ENCODE measurements at regions of chr14 and their contacts with region 1.

Region 1: DNA sequence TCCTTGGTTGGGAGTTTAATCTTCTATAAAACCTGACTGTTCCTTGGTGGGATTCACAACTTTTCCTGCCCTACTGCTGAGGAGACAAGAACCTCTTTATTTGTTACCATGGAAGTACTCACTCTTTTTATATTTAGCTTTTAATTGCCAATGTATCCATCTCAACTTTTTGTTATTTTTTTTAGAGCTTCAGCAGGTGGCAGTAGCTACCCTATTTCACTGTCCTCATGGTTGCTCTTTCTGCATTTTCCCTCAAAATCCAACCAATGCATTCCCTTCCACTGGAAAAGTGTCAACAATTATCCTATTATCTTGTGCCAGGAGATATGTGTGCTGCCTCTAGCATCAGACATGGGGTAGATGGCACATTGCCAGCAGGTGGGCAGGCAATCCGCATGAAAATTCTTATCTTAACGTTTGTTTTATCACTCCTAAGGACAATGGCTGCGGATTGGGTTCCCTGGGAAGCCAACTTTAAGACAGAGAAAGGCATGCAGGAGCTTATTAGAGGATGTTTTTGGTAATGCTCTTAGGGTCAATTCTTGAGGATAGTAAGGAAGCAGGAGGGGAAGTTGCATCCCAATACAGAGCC is 406.4 kb downstream of the SNAPC1 start:
- DNase-seq: no peak
- ATAC-seq: no peak
- H3K4me3 ChIP-seq: no peak overlapping the region
- H3K27ac ChIP-seq: no peak overlapping the region
- H3K4me1 ChIP-seq: no peaks in the 10 kb centered on the region
- H3K27me3 ChIP-seq: no peaks in the 10 kb centered on the region
- CTCF ChIP-seq: peak; percentile 17; the same call in 1 of the 2 replicates

Region 2: GRCh38 chr14:63257299-63257698 is 1088.6 kb after region 1 on chr14:
- CTCF ChIA-PET with region 1: no interaction called
- POLR2A ChIA-PET with region 1: interaction called, 20 read pairs
- in situ Hi-C with region 1: no loop called
- intact Hi-C with region 1: no loop called
- DNase-seq: no peak
- ATAC-seq: no peak
- H3K4me3 ChIP-seq: no peak overlapping the region
- H3K27ac ChIP-seq: no peak overlapping the region
- H3K4me1 ChIP-seq: no peaks in the 10 kb centered on the region
- H3K27me3 ChIP-seq: no peaks in the 10 kb centered on the region; the same call in 1 of the 2 replicates
- CTCF ChIP-seq: no peak